ENCODE measurements at regions of chr13 and their contacts with region 1.

Region 1: DNA sequence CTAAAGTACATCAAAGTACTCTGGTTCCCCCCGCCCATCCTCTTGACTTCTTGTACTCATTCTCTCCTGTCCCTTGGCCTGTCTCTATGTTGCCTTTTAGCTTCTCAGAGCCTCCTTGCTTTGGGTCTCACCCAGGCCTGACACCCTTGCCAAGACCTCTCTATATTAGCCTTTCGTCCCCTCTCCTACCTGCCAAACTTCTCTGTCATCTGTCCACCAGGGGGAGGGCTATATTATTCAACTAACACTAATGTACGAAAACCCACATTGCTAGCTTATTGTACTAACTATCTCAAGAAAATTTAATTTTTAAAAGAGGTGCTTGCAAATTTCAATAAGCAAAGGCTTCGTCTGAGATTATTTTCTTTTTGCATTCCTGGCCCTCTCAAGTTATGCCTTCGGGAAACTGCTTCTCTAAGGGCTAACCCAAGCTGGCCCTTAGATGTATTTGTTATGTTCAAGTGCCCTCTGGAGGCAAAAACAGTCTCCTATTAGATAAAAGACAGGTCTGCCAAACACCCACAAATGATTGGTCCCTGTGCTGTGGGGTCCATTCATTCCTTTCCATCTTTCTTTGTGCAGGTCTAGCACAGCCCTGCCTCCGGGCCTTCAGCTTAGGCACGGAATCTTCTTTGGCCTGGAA is 6.3 kb upstream of the MRPS31 start:
- DNase-seq: no peak
- ATAC-seq: peak; percentile 85
- H3K4me3 Mint-ChIP-seq: peak overlapping the region; percentile 70
- H3K27ac Mint-ChIP-seq: peak overlapping the region; percentile 91
- H3K4me1 Mint-ChIP-seq: peaks cover 25% of the 10 kb centered on the region
- H3K27me3 Mint-ChIP-seq: no peaks in the 10 kb centered on the region
- CTCF ChIP-seq: peak; percentile 91

Region 2: GRCh38 chr13:39684531-39685137 is 1092.7 kb before region 1 on chr13:
- CTCF ChIA-PET with region 1: interaction called, 27 read pairs
- POLR2A ChIA-PET with region 1: no interaction called
- intact Hi-C with region 1: loop called (anchors 1 kb)
- DNase-seq: no peak
- ATAC-seq: peak; percentile 28
- H3K4me3 Mint-ChIP-seq: no peak overlapping the region
- H3K27ac Mint-ChIP-seq: no peak overlapping the region
- H3K4me1 Mint-ChIP-seq: peaks cover 14% of the 10 kb centered on the region
- H3K27me3 Mint-ChIP-seq: no peaks in the 10 kb centered on the region
- CTCF ChIP-seq: no peak

Region 3: GRCh38 chr13:39942552-39943273 is 834.6 kb before region 1 on chr13:
- CTCF ChIA-PET with region 1: interaction called, 21 read pairs
- POLR2A ChIA-PET with region 1: no interaction called
- intact Hi-C with region 1: loop called (anchors 1 kb)
- DNase-seq: peak; percentile 44
- ATAC-seq: peak; percentile 100
- H3K4me3 Mint-ChIP-seq: no peak overlapping the region
- H3K27ac Mint-ChIP-seq: no peak overlapping the region
- H3K4me1 Mint-ChIP-seq: no peaks in the 10 kb centered on the region
- H3K27me3 Mint-ChIP-seq: peaks cover 1% of the 10 kb centered on the region
- CTCF ChIP-seq: peak; percentile 93

Region 4: DNA sequence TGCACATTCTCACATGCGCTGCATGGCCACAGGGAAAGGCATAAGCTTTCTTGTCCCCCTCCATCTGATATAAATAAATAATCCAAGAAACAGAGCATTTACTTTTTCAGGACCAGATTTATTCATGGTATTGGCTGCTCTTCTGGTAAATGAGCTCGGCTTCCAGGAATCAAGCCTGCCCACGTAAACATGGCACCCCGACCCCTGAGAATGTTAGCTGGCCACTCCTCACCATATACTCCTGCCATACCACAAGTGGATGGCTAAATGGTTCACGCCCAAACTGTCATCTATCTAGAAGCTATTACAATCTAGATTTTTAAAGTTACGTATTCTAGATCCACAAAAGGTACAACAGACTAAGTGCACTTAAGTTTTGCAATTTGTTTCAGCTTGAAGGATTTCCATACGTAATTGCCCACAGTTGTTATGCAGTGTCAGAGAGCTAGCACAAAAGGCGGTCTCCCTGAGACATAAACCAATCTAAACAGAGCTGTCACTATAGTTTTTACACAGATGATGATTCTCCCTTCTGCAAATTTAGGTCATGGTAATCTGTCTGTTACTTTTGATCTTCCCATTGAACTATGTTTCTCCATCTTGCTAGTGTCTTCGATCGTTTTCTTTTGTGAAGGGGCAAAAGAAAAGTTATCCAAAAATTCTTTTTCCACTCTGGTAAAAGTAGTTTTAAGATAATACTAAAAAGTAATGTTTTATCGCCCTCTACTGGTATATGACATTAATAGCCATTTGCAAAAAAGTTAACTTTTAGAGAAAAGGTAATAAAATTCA is 94.6 kb before region 1 on chr13:
- CTCF ChIA-PET with region 1: interaction called, 11 read pairs
- POLR2A ChIA-PET with region 1: no interaction called
- intact Hi-C with region 1: loop called (anchors 2 kb)
- DNase-seq: no peak
- ATAC-seq: no peak
- H3K4me3 Mint-ChIP-seq: no peak overlapping the region
- H3K27ac Mint-ChIP-seq: no peak overlapping the region
- H3K4me1 Mint-ChIP-seq: peaks cover 24% of the 10 kb centered on the region
- H3K27me3 Mint-ChIP-seq: no peaks in the 10 kb centered on the region
- CTCF ChIP-seq: no peak

Region 5: GRCh38 chr13:40756042-40756441 is 21.2 kb before region 1 on chr13:
- CTCF ChIA-PET with region 1: no interaction called
- POLR2A ChIA-PET with region 1: no interaction called
- intact Hi-C with region 1: no loop called
- DNase-seq: no peak
- ATAC-seq: no peak
- H3K4me3 Mint-ChIP-seq: no peak overlapping the region
- H3K27ac Mint-ChIP-seq: no peak overlapping the region
- H3K4me1 Mint-ChIP-seq: peaks cover 13% of the 10 kb centered on the region
- H3K27me3 Mint-ChIP-seq: no peaks in the 10 kb centered on the region
- CTCF ChIP-seq: no peak

Region 6: GRCh38 chr13:40789275-40790133 is 12.2 kb after region 1 on chr13 and contains the start of gene SLC25A15:
- CTCF ChIA-PET with region 1: interaction called, 7 read pairs
- POLR2A ChIA-PET with region 1: interaction called, 7 read pairs
- intact Hi-C with region 1: loop called (anchors 1 kb)
- DNase-seq: peak; percentile 82
- ATAC-seq: peak; percentile 95
- H3K4me3 Mint-ChIP-seq: peak within 1 kb of the TSS; percentile 83
- H3K27ac Mint-ChIP-seq: peak within 1 kb of the TSS; percentile 53
- H3K4me1 Mint-ChIP-seq: peaks cover 9% of the 10 kb centered on the region
- H3K27me3 Mint-ChIP-seq: no peaks in the 10 kb centered on the region
- CTCF ChIP-seq: no peak
- total RNA-seq, gene SLC25A15: 4.6 and 4.9 TPM in 2 replicates

Region 7: GRCh38 chr13:40813661-40814454 is 36.6 kb after region 1 on chr13:
- CTCF ChIA-PET with region 1: interaction called, 6 read pairs
- POLR2A ChIA-PET with region 1: interaction called, 4 read pairs
- intact Hi-C with region 1: loop called (anchors 1 kb)
- DNase-seq: no peak
- ATAC-seq: no peak
- H3K4me3 Mint-ChIP-seq: no peak overlapping the region
- H3K27ac Mint-ChIP-seq: no peak overlapping the region
- H3K4me1 Mint-ChIP-seq: peaks cover 19% of the 10 kb centered on the region
- H3K27me3 Mint-ChIP-seq: no peaks in the 10 kb centered on the region
- CTCF ChIP-seq: no peak

Measured in activated B cell treated with CpG ODN at 0.5 μM for 24 hours (primary cell).